Endothelial cell of umbilical vein (primary cell): ENCODE measurements at regions of chr12 and their contacts with region 1.

Region 1: DNA sequence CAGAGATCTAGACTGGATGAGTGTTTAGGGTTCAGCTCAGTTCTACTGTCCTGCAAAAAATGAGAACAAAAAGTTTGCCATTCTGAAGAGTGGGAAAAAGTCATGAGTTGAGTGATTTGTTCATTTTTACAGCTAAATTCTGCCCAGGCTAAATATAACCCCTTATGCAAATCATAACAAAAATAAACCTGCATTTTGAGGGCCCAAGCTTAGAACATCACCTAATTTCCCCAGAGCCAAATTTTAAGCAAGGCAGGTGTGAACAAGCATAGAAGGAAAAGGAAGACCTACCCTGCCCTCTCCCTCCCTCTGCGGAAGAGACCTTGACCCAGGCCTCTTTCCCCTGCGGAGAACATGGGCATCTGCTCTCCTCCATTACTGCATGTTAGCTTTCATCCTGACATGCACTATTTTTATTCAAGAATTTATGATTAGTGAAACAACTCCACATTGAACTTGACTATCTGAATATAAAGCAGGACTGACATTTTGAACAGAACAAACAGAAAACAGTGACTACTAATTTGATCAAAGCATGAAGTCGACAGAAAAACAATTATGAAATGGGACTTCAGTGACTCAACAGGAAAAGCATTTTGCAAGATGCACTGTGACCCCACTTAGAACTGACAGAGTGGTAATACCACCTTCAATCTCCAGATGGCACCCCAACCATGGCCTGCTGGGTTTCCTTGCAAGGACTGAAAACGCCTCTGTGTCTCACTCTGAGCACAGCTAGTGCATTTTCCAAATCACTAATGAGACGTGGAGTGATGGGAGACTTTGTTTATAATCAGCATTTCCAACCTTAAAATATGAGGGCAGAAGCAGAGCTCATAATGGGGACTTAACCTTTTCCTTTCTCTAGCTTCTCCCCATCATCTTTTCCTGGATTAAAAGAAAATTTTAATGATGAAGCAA is 30.9 kb upstream of the SELPLG start:
- DNase-seq: peak; percentile 99
- H3K4me3 ChIP-seq: peak overlapping the region in 1 of 3 experiments; percentile 45
- H3K27ac ChIP-seq: peak overlapping the region; percentile 82
- H3K4me1 ChIP-seq: peaks cover 20% of the 10 kb centered on the region
- H3K27me3 ChIP-seq: no peaks in the 10 kb centered on the region
- CTCF ChIP-seq: peak; percentile 84 to 93
- POLR2A ChIP-seq: no peak

Region 2: GRCh38 chr12:108618079-108618952 is 46.3 kb before region 1 on chr12:
- CTCF ChIA-PET with region 1: interaction called, 6 read pairs
- POLR2A ChIA-PET with region 1: no interaction called
- dilution Hi-C with region 1: no loop called
- intact Hi-C with region 1: loop called (anchors 2 kb)
- DNase-seq: peak; percentile 71
- H3K4me3 ChIP-seq: no peak overlapping the region
- H3K27ac ChIP-seq: no peak overlapping the region
- H3K4me1 ChIP-seq: peaks cover 13% of the 10 kb centered on the region
- H3K27me3 ChIP-seq: no peaks in the 10 kb centered on the region
- CTCF ChIP-seq: peak; percentile 92 to 96
- POLR2A ChIP-seq: no peak

Region 3: GRCh38 chr12:108678104-108678730 is 13.6 kb after region 1 on chr12:
- CTCF ChIA-PET with region 1: interaction called, 14 read pairs
- POLR2A ChIA-PET with region 1: no interaction called
- dilution Hi-C with region 1: no loop called
- intact Hi-C with region 1: no loop called
- DNase-seq: no peak
- H3K4me3 ChIP-seq: no peak overlapping the region
- H3K27ac ChIP-seq: no peak overlapping the region
- H3K4me1 ChIP-seq: peaks cover 7% of the 10 kb centered on the region
- H3K27me3 ChIP-seq: no peaks in the 10 kb centered on the region
- CTCF ChIP-seq: no peak
- POLR2A ChIP-seq: no peak

Region 4: GRCh38 chr12:108731105-108731865 is 66.7 kb after region 1 on chr12 and contains the start of gene CORO1C:
- CTCF ChIA-PET with region 1: interaction called, 17 read pairs
- POLR2A ChIA-PET with region 1: interaction called, 3 read pairs
- dilution Hi-C with region 1: no loop called
- intact Hi-C with region 1: loop called (anchors 1 kb)
- DNase-seq: peak; percentile 99
- H3K4me3 ChIP-seq: peak within 1 kb of the TSS; percentile 57 to 91 (median 76)
- H3K27ac ChIP-seq: peak within 1 kb of the TSS; percentile 92
- H3K4me1 ChIP-seq: peaks cover 29% of the 10 kb centered on the region
- H3K27me3 ChIP-seq: no peaks in the 10 kb centered on the region
- CTCF ChIP-seq: peak; percentile 89 to 95
- POLR2A ChIP-seq: peak; percentile 93
- total RNA-seq, gene CORO1C: 212 and 240 TPM in 2 replicates

Region 5: DNA sequence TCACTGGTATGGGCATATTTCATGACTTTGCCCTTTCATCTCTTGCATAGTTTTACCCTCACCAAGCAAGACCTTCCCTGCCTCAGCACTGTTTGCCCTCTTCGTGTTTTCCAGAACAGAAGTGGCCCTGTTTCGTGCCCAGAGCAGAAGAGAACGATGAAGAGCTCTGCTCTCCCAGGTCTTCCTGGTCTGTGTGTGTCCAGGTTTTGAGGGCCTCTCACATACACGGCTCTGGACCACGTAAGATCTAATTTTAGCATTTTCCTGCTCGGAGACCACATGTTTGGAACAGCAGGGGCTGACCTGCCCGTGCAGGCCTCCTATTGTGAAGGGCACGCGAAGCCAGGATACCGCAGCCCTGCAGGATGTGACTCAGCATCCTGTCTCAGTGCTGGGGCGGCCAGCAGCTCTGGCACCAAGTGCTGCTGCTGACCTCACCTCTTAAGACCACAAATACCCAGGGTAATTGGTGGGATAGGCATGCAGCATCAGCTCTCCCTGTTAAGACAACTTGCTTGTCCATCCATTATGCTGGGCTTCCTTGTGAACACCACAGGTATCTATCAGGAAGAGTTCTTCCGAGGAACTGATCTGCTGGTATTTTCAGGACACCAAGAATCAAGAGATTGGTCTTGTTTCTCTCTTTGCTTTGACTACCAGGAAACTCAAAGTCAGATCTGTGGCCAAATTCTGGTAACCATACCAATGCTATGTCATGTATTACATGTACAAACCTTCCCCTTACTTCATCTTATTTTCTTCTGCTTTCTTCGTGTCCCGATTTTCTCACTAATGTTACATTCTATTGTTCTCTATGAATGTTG is 173.8 kb after region 1 on chr12:
- CTCF ChIA-PET with region 1: interaction called, 7 read pairs
- POLR2A ChIA-PET with region 1: no interaction called
- dilution Hi-C with region 1: loop called (anchors 25 kb)
- intact Hi-C with region 1: no loop called
- DNase-seq: peak; percentile 100
- H3K4me3 ChIP-seq: peak overlapping the region in 1 of 3 experiments; percentile 16
- H3K27ac ChIP-seq: peak overlapping the region; percentile 98
- H3K4me1 ChIP-seq: peaks cover 70% of the 10 kb centered on the region
- H3K27me3 ChIP-seq: no peaks in the 10 kb centered on the region
- CTCF ChIP-seq: no peak
- POLR2A ChIP-seq: peak; percentile 79

Region 6: GRCh38 chr12:108950991-108951739 is 286.6 kb after region 1 on chr12:
- CTCF ChIA-PET with region 1: interaction called, 21 read pairs
- POLR2A ChIA-PET with region 1: no interaction called
- dilution Hi-C with region 1: no loop called
- intact Hi-C with region 1: loop called (anchors 1 kb)
- DNase-seq: peak; percentile 80
- H3K4me3 ChIP-seq: no peak overlapping the region
- H3K27ac ChIP-seq: no peak overlapping the region
- H3K4me1 ChIP-seq: no peaks in the 10 kb centered on the region
- H3K27me3 ChIP-seq: no peaks in the 10 kb centered on the region
- CTCF ChIP-seq: peak; percentile 74 to 80
- POLR2A ChIP-seq: no peak

Region 7: GRCh38 chr12:109488051-109488665 is 823.6 kb after region 1 on chr12:
- CTCF ChIA-PET with region 1: no interaction called
- POLR2A ChIA-PET with region 1: no interaction called
- dilution Hi-C with region 1: no loop called
- intact Hi-C with region 1: no loop called
- DNase-seq: no peak
- H3K4me3 ChIP-seq: no peak overlapping the region
- H3K27ac ChIP-seq: no peak overlapping the region
- H3K4me1 ChIP-seq: no peaks in the 10 kb centered on the region
- H3K27me3 ChIP-seq: no peaks in the 10 kb centered on the region
- CTCF ChIP-seq: no peak
- POLR2A ChIP-seq: no peak